ENCODE measurements at regions of chr6 and their contacts with region 1.

Region 1: DNA sequence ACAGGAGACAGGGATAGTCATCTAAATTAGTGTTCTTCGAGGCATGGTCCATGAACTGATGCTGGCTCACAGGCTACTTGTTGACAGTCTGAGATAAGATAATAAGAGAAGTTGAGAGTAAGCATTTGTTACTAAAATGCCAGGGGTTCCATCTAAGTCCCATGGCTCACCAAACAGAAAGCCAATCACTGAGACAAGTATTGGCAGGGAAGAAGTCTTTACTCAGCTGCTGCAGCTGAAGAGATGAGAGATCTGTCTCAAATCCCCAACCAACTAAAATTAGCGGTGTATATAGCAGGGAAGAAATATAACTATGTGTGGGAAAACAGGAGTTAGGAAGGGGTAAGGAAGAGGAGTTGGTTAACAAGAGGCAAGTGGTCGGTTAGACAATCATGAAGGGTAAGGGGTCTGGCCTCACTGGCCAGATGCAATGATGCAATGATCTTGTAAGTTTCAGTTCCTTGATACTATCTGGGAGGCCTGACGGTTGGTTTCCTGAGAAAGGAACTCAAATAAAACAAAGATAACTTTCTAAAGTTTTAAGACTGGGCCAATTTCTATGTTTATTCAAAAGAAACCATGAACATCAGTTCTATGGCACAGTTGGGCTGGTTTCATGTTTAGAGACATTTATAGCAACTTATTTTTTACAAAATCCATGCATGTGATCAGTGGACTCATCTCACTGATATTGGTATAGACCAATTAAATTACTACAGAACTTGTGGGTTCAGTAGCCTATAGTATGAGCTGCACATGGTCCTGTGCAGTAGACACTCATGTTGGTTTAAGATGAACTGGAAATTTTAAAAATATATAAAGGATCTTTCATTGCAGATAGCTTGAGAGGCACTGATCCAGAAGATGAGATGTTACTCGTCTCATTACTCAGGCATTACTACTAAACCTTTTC is 9.9 kb upstream of the HEBP2 start:
- DNase-seq: no peak
- H3K4me3 ChIP-seq: no peak overlapping the region
- H3K27ac ChIP-seq: no peak overlapping the region
- H3K4me1 ChIP-seq: no peaks in the 10 kb centered on the region
- H3K27me3 ChIP-seq: no peaks in the 10 kb centered on the region
- CTCF ChIP-seq: no peak
- EP300 ChIP-seq: no peak
- POLR2A ChIP-seq: no peak

Region 2: DNA sequence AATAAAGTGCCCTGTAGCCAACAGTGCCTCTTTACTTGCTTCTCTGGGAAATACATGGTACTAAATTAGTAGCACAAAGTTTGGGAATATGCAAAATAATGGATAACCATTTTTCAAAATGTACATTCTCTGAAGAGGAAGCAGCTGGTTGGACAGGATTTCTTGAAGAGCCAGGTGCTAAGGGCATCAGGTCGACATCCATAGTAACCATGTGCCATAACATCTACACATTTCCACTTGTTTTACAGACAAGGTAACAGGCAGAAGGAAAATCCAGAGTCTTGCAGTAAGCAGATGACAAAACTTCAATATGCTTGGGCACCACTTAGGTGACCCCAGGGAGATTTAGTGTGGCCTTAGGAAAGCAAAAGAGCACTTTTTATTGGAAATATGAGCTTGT is 53.0 kb before region 1 on chr6:
- in situ Hi-C with region 1: no loop called
- intact Hi-C with region 1: loop called (anchors 2 kb)
- DNase-seq: no peak
- H3K4me3 ChIP-seq: no peak overlapping the region
- H3K27ac ChIP-seq: no peak overlapping the region
- H3K4me1 ChIP-seq: no peaks in the 10 kb centered on the region
- H3K27me3 ChIP-seq: no peaks in the 10 kb centered on the region
- CTCF ChIP-seq: no peak
- EP300 ChIP-seq: no peak
- POLR2A ChIP-seq: no peak

Region 3: GRCh38 chr6:139068846-139069245 is 674.7 kb after region 1 on chr6:
- in situ Hi-C with region 1: no loop called
- intact Hi-C with region 1: no loop called
- DNase-seq: no peak
- H3K4me3 ChIP-seq: no peak overlapping the region
- H3K27ac ChIP-seq: no peak overlapping the region
- H3K4me1 ChIP-seq: no peaks in the 10 kb centered on the region
- H3K27me3 ChIP-seq: no peaks in the 10 kb centered on the region
- CTCF ChIP-seq: no peak
- EP300 ChIP-seq: no peak
- POLR2A ChIP-seq: no peak

Measured in transverse colon (tissue), 4 donors.